Activated CD8-positive, alpha-beta T cell treated with anti-CD3 and anti-CD28 coated beads for 36 hours (primary cell): ENCODE measurements at regions of chr7 and their contacts with region 1.

Region 1: DNA sequence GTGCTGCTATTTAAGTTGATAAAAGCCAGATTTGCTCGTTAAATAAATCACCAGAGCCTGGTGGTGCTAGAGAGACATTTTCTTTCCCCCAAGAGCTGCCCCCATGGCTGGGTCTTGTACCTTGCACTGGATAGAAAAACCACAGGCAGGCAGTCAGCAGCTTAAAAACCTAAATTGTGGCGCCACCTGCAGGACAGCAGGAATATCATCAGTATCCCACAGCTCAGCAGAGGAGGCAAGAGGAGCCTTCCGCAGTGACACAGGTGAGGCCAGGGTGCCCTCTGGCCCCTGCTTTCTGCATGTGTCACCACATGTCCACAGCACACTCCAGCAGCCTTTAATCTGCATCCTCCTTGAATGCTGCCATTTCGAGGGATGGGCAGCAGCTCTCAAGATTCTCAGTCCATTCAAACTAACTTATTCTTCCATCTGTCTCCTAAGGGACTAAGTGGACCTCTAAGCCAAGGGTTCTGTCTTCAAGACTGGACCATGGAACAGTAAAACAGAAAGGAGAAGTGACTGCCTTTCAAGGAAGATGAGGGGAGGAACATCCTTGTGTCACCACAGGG is 4.5 kb upstream of the PLXNA4 start:
- DNase-seq: peak; percentile 85
- ATAC-seq: peak; percentile 81
- H3K4me3 Mint-ChIP-seq: no peak overlapping the region
- H3K27ac Mint-ChIP-seq: no peak overlapping the region
- H3K4me1 Mint-ChIP-seq: no peaks in the 10 kb centered on the region
- H3K27me3 Mint-ChIP-seq: peaks cover 21% of the 10 kb centered on the region
- CTCF ChIP-seq: peak; percentile 87

Region 2: GRCh38 chr7:131945313-131945911 is 635.4 kb before region 1 on chr7:
- CTCF ChIA-PET with region 1: interaction called, 12 read pairs
- POLR2A ChIA-PET with region 1: no interaction called
- intact Hi-C with region 1: no loop called
- DNase-seq: peak; percentile 54
- ATAC-seq: peak; percentile 76
- H3K4me3 Mint-ChIP-seq: no peak overlapping the region
- H3K27ac Mint-ChIP-seq: no peak overlapping the region
- H3K4me1 Mint-ChIP-seq: no peaks in the 10 kb centered on the region
- H3K27me3 Mint-ChIP-seq: peaks cover 23% of the 10 kb centered on the region
- CTCF ChIP-seq: peak; percentile 82

Region 3: GRCh38 chr7:132386201-132386681 is 194.6 kb before region 1 on chr7:
- CTCF ChIA-PET with region 1: interaction called, 117 read pairs
- POLR2A ChIA-PET with region 1: interaction called, 3 read pairs
- intact Hi-C with region 1: no loop called
- DNase-seq: no peak
- ATAC-seq: no peak
- H3K4me3 Mint-ChIP-seq: no peak overlapping the region
- H3K27ac Mint-ChIP-seq: no peak overlapping the region
- H3K4me1 Mint-ChIP-seq: no peaks in the 10 kb centered on the region
- H3K27me3 Mint-ChIP-seq: peaks cover 10% of the 10 kb centered on the region
- CTCF ChIP-seq: no peak

Region 4: GRCh38 chr7:132400561-132401142 is 180.1 kb before region 1 on chr7:
- CTCF ChIA-PET with region 1: interaction called, 117 read pairs
- POLR2A ChIA-PET with region 1: no interaction called
- intact Hi-C with region 1: loop called (anchors 2 kb)
- DNase-seq: no peak
- ATAC-seq: no peak
- H3K4me3 Mint-ChIP-seq: no peak overlapping the region
- H3K27ac Mint-ChIP-seq: no peak overlapping the region
- H3K4me1 Mint-ChIP-seq: no peaks in the 10 kb centered on the region
- H3K27me3 Mint-ChIP-seq: no peaks in the 10 kb centered on the region
- CTCF ChIP-seq: no peak

Region 5: DNA sequence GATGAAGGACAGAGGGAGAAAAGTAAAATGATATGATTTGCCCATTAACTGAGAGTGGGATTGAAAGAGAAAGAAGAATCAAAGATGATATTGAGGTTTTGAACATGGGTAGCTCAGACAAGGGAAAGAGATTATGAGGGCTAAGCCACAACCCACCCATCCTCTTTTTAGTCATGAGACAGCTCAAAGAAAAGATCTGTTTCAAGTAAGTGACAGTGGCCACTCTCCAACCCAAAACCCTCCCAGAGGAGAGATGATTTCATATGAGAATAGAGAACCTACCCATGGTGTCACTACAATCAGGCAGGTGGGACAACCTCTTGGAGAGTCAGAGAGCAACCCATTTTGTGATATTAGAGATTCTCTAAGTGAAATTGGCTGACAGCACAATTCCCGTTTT is 36.8 kb before region 1 on chr7:
- CTCF ChIA-PET with region 1: interaction called, 10 read pairs
- POLR2A ChIA-PET with region 1: no interaction called
- intact Hi-C with region 1: no loop called
- DNase-seq: peak; percentile 44
- ATAC-seq: peak; percentile 62
- H3K4me3 Mint-ChIP-seq: no peak overlapping the region
- H3K27ac Mint-ChIP-seq: no peak overlapping the region
- H3K4me1 Mint-ChIP-seq: peaks cover 10% of the 10 kb centered on the region
- H3K27me3 Mint-ChIP-seq: no peaks in the 10 kb centered on the region
- CTCF ChIP-seq: no peak

Region 6: GRCh38 chr7:132568962-132569361 is 11.8 kb before region 1 on chr7:
- CTCF ChIA-PET with region 1: interaction called, 22 read pairs
- POLR2A ChIA-PET with region 1: interaction called, 3 read pairs
- intact Hi-C with region 1: no loop called
- DNase-seq: no peak
- ATAC-seq: no peak
- H3K4me3 Mint-ChIP-seq: no peak overlapping the region
- H3K27ac Mint-ChIP-seq: no peak overlapping the region
- H3K4me1 Mint-ChIP-seq: peaks cover 7% of the 10 kb centered on the region
- H3K27me3 Mint-ChIP-seq: peaks cover 55% of the 10 kb centered on the region
- CTCF ChIP-seq: no peak

Region 7: GRCh38 chr7:132672200-132672990 is 91.6 kb after region 1 on chr7:
- CTCF ChIA-PET with region 1: no interaction called
- POLR2A ChIA-PET with region 1: no interaction called
- intact Hi-C with region 1: no loop called
- DNase-seq: no peak
- ATAC-seq: no peak
- H3K4me3 Mint-ChIP-seq: no peak overlapping the region
- H3K27ac Mint-ChIP-seq: no peak overlapping the region
- H3K4me1 Mint-ChIP-seq: no peaks in the 10 kb centered on the region
- H3K27me3 Mint-ChIP-seq: no peaks in the 10 kb centered on the region
- CTCF ChIP-seq: no peak

Region 8: GRCh38 chr7:132837529-132837928 is 256.7 kb after region 1 on chr7:
- CTCF ChIA-PET with region 1: no interaction called
- POLR2A ChIA-PET with region 1: no interaction called
- intact Hi-C with region 1: no loop called
- DNase-seq: no peak
- ATAC-seq: no peak
- H3K4me3 Mint-ChIP-seq: no peak overlapping the region
- H3K27ac Mint-ChIP-seq: no peak overlapping the region
- H3K4me1 Mint-ChIP-seq: no peaks in the 10 kb centered on the region
- H3K27me3 Mint-ChIP-seq: no peaks in the 10 kb centered on the region
- CTCF ChIP-seq: no peak

Region 9: GRCh38 chr7:133320891-133321290 is 740.1 kb after region 1 on chr7:
- CTCF ChIA-PET with region 1: no interaction called
- POLR2A ChIA-PET with region 1: no interaction called
- intact Hi-C with region 1: no loop called
- DNase-seq: no peak
- ATAC-seq: no peak
- H3K4me3 Mint-ChIP-seq: no peak overlapping the region
- H3K27ac Mint-ChIP-seq: no peak overlapping the region
- H3K4me1 Mint-ChIP-seq: no peaks in the 10 kb centered on the region
- H3K27me3 Mint-ChIP-seq: no peaks in the 10 kb centered on the region
- CTCF ChIP-seq: no peak